A673 (cell line): ENCODE measurements at regions of chr15 and their contacts with region 1.

Region 1: GRCh38 chr15:72155635-72156616 is 37.7 kb downstream of the SENP8 start:
- DNase-seq: peak; percentile 88
- H3K4me3 ChIP-seq: peak overlapping the region; percentile 50
- H3K27ac ChIP-seq: no peak overlapping the region
- H3K4me1 ChIP-seq: peaks cover 5% of the 10 kb centered on the region
- H3K27me3 ChIP-seq: no peaks in the 10 kb centered on the region
- CTCF ChIP-seq: peak; percentile 88

Region 2: GRCh38 chr15:71448688-71449114 is 707.2 kb before region 1 on chr15:
- CTCF ChIA-PET with region 1: no interaction called
- POLR2A ChIA-PET with region 1: no interaction called
- intact Hi-C with region 1: loop called (anchors 2 kb)
- DNase-seq: peak; percentile 71
- H3K4me3 ChIP-seq: no peak overlapping the region
- H3K27ac ChIP-seq: no peak overlapping the region
- H3K4me1 ChIP-seq: no peaks in the 10 kb centered on the region
- H3K27me3 ChIP-seq: no peaks in the 10 kb centered on the region
- CTCF ChIP-seq: peak; percentile 81

Region 3: GRCh38 chr15:71752604-71753289 is 403.2 kb before region 1 on chr15:
- CTCF ChIA-PET with region 1: interaction called, 9 read pairs
- POLR2A ChIA-PET with region 1: no interaction called
- intact Hi-C with region 1: loop called (anchors 2 kb)
- DNase-seq: peak; percentile 82
- H3K4me3 ChIP-seq: no peak overlapping the region
- H3K27ac ChIP-seq: no peak overlapping the region
- H3K4me1 ChIP-seq: no peaks in the 10 kb centered on the region
- H3K27me3 ChIP-seq: no peaks in the 10 kb centered on the region
- CTCF ChIP-seq: peak; percentile 72

Region 4: DNA sequence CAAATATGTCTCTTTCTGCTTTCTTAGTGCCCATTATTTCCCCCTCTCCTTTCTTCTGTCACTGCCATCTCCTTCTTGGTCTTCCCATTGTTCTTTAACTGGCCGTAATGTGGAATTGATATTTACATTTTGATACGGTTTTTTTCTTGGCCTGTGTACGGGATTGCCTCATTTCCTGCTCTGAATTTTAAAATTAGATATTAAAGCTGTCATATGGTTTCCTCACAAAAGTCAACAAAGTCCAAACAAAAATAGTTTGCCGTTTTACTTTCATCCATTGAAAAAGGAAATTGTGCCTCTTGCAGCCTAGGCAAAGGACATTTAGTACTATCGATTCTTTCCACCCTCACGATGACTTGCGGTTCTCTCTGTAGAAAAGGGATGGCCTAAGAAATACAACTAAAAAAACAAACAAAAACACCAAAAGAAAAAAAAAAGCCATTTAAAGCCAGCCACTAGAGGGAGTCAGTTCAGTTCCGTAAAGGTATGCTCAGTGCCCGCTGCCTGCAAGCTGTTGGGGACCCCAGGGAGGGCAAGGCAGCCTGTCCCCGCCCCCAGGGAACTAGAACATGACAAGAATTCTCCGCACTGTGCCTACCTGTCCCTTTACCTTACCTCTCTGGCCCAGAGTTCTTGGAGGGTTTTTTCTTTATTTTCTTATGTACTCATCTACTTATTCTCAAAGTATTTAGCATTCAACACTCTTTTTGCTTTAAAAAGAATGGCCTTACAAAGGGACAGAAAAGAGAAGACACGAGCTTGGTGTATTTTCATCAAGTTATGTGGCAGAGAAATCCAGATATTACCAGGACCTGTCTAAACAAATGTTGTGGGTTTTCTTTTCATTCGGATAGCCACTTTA is 375.6 kb before region 1 on chr15:
- CTCF ChIA-PET with region 1: interaction called, 5 read pairs
- POLR2A ChIA-PET with region 1: no interaction called
- intact Hi-C with region 1: loop called (anchors 5 kb)
- DNase-seq: peak; percentile 69
- H3K4me3 ChIP-seq: no peak overlapping the region
- H3K27ac ChIP-seq: no peak overlapping the region
- H3K4me1 ChIP-seq: no peaks in the 10 kb centered on the region
- H3K27me3 ChIP-seq: no peaks in the 10 kb centered on the region
- CTCF ChIP-seq: peak; percentile 93

Region 5: DNA sequence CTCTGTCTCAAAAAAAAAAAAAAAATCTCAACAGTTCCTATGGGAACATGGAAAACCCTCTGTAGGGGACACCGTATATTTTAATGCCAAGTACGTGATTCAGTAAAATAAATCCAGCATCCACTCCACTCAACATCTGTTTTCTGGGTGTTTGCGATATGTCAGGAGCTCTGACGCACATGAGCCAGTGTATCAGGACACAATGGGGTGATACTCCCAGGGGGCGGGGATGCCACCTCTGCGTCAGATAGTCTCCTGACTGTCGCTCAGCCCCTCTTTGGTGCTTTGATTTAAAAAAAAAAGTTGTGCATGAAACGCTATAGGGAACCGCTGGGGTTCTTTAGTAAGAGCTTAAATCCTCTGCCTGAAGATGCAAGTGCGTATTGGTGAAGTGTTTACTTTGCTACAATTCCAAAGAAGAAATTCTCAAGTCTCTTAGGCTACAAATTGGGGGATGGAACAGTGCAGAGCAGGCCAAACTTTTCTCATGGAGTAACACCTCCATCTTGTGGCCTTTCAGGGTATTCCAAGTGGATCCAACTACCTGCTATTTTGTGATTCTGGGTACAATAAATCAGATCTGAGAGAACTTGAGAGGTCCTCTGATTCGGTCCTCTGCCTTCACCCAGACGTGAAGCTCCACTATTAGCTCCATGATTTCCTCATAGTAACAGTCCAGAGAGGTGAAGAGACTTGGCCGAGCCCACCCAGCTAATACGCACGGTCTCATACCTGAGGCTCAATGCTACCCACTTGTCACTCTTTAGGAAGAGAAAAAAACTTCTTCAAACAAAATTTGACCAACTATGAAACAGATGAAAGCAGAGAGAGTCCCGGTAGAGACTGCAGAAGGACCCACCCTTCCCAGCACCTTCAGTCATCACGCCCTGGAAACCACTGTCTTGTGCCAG is 354.8 kb before region 1 on chr15:
- CTCF ChIA-PET with region 1: interaction called, 5 read pairs
- POLR2A ChIA-PET with region 1: interaction called, 4 read pairs
- intact Hi-C with region 1: loop called (anchors 1 kb)
- DNase-seq: peak; percentile 75
- H3K4me3 ChIP-seq: no peak overlapping the region
- H3K27ac ChIP-seq: no peak overlapping the region
- H3K4me1 ChIP-seq: no peaks in the 10 kb centered on the region
- H3K27me3 ChIP-seq: no peaks in the 10 kb centered on the region
- CTCF ChIP-seq: peak; percentile 78

Region 6: DNA sequence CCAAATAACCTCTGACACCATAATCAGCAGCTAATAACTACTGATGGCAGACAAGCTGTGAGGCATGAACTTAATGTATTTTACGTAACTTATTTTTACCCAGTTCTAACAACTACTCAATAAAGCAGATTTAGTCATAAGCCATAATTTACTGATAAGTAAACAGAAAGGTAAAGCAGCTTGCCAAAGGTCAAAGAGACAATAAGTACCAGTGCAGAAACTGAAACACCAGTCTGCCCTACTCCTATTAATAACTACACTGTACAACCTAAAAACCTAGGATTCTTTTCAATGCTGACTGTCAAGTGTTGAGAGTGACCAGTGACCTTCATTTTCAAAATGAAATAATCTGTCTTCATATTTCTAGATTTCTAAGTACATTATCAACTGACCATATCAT is 193.4 kb before region 1 on chr15:
- CTCF ChIA-PET with region 1: no interaction called
- POLR2A ChIA-PET with region 1: no interaction called
- intact Hi-C with region 1: no loop called
- DNase-seq: no peak
- H3K4me3 ChIP-seq: no peak overlapping the region
- H3K27ac ChIP-seq: no peak overlapping the region
- H3K4me1 ChIP-seq: no peaks in the 10 kb centered on the region
- H3K27me3 ChIP-seq: no peaks in the 10 kb centered on the region
- CTCF ChIP-seq: no peak

Region 7: DNA sequence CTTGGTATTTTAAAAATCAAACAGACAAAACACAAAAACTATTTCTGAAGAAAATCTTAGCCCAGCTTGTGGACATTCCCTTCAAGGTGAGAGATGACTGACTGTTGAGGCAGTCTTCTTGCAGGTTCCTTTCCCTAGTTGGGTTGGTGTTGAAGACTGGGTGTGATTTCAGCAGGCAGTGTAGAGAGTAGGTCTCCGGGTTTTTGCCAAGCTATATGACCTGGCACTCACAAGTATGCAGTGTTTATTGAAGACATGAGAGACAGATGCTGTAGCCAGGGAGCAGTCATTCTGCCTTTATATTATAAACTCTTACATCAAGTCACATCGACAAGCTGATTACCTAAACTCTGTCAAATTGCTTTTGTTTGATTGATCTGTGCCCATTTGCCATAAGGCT is 20.2 kb before region 1 on chr15:
- CTCF ChIA-PET with region 1: no interaction called
- POLR2A ChIA-PET with region 1: no interaction called
- intact Hi-C with region 1: no loop called
- DNase-seq: no peak
- H3K4me3 ChIP-seq: no peak overlapping the region
- H3K27ac ChIP-seq: no peak overlapping the region
- H3K4me1 ChIP-seq: no peaks in the 10 kb centered on the region
- H3K27me3 ChIP-seq: no peaks in the 10 kb centered on the region
- CTCF ChIP-seq: no peak

Region 8: GRCh38 chr15:72168111-72168808 is 12.3 kb after region 1 on chr15:
- CTCF ChIA-PET with region 1: interaction called, 10 read pairs
- POLR2A ChIA-PET with region 1: no interaction called
- intact Hi-C with region 1: no loop called
- DNase-seq: peak; percentile 84
- H3K4me3 ChIP-seq: no peak overlapping the region
- H3K27ac ChIP-seq: no peak overlapping the region
- H3K4me1 ChIP-seq: peaks cover 7% of the 10 kb centered on the region
- H3K27me3 ChIP-seq: no peaks in the 10 kb centered on the region
- CTCF ChIP-seq: no peak